ENCODE measurements at regions of chr6 and their contacts with region 1.

Region 1: DNA sequence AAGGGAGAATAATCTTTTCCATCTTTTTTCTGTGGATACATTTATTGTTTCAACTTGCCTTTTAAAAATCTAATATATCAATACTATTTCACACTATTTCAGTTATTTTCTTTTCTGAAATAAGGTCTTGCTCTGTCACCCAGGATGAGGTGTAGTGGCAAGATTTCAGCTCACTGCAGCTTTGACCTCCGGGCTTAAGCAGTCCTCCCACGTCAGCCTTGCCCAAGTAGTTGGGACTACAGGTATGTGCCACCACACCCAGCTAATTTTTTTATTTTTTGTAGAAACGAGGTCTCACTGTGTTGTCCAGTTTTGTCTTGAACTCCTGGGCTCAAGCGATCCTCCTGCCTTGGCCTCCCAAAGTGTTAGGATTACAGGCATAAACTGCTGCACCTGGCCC is 8.6 kb downstream of the KCTD20 start:
- DNase-seq: no peak
- ATAC-seq: no peak
- H3K4me3 ChIP-seq: no peak overlapping the region
- H3K27ac ChIP-seq: no peak overlapping the region
- H3K4me1 ChIP-seq: no peaks in the 10 kb centered on the region
- H3K27me3 ChIP-seq: no peaks in the 10 kb centered on the region
- CTCF ChIP-seq: no peak

Region 2: GRCh38 chr6:35980991-35981660 is 470.3 kb before region 1 on chr6:
- CTCF ChIA-PET with region 1: no interaction called
- POLR2A ChIA-PET with region 1: no interaction called
- in situ Hi-C with region 1: no loop called
- intact Hi-C with region 1: no loop called
- DNase-seq: no peak
- ATAC-seq: no peak
- H3K4me3 ChIP-seq: no peak overlapping the region
- H3K27ac ChIP-seq: no peak overlapping the region
- H3K4me1 ChIP-seq: no peaks in the 10 kb centered on the region
- H3K27me3 ChIP-seq: peaks cover 7% of the 10 kb centered on the region; the same call in 1 of the 2 replicates
- CTCF ChIP-seq: no peak

Region 3: GRCh38 chr6:36029464-36029863 is 421.9 kb before region 1 on chr6:
- CTCF ChIA-PET with region 1: no interaction called
- POLR2A ChIA-PET with region 1: no interaction called
- in situ Hi-C with region 1: no loop called
- intact Hi-C with region 1: no loop called
- DNase-seq: no peak
- ATAC-seq: no peak
- H3K4me3 ChIP-seq: peak overlapping the region; percentile 88 to 91; a peak in 3 of 4 replicates
- H3K27ac ChIP-seq: peak overlapping the region; percentile 91
- H3K4me1 ChIP-seq: peaks cover 15% of the 10 kb centered on the region
- H3K27me3 ChIP-seq: no peaks in the 10 kb centered on the region
- CTCF ChIP-seq: no peak

Region 4: DNA sequence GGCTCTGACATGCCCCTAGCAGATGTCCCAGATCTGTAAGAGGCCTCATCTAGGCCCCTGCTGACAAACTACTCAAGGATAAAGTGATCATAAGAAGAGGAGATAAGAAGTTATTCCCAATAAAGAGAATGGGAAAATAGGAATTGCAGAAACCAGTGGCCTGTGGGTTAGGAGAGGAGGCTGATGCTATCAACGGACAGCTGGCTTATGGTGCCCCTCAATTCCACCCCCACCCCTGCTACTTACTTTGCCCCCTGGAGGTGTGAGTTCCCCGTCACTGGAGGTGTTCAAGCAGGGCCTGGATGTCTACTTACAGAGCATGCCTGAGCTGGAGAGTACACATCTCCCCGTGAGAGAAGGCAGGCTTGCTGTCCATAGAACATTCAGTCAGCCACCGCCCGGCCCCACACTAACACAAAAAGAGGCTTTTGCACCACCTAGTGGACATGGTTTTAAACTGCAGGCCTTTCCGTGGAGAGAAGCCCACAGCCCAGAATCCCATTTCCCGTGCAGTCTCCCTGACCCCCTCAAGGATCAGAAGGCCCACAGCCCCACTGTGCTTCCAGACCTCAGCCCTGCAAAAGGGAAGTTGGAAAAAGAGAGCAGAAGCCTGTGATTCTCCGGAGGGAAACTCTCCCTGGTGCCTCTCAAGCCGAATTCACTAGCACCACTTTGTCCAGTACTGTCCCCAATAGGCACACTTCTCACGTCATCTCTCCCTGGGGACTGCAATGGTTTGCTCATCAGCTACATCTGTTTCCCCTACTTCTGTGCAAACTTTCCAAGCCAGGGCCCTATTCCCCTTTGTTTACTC is 90.9 kb before region 1 on chr6:
- CTCF ChIA-PET with region 1: no interaction called
- POLR2A ChIA-PET with region 1: no interaction called
- in situ Hi-C with region 1: no loop called
- intact Hi-C with region 1: no loop called
- DNase-seq: peak; percentile 27
- ATAC-seq: peak; percentile 94
- H3K4me3 ChIP-seq: no peak overlapping the region; a peak in 1 of 4 replicates
- H3K27ac ChIP-seq: no peak overlapping the region
- H3K4me1 ChIP-seq: 0 out of 2 replicates have a peak, but pooled peaks cover 4% of the 10 kb centered on the region
- H3K27me3 ChIP-seq: no peaks in the 10 kb centered on the region
- CTCF ChIP-seq: peak; percentile 88

Region 5: DNA sequence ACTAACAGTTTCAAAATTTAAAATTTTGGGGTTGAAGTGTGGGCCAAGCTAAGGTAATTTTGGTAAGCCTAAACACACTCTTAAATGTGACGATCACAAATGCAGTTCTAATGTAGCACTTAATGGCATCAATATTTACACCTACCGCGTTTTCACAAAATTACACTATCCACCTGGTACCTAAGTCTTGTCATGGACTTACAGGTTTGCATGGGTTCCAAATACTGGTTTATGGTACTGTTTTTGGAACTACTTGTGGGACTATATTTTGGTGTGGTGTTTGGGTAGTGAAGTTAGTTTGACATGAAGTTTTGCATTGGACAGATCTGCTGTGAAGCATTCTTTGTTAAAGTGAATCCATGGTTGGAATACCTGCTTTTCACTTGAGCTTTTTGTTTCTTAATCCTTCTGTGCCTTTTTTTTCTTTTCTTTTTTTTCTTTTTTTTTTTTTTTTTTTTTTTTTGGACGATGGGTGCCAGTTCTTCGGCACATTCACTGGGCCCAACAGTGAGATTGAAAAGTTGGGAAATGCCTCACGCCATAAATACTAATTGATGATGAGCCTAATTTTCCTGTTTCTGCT is 149.3 kb after region 1 on chr6:
- CTCF ChIA-PET with region 1: interaction called, 14 read pairs
- POLR2A ChIA-PET with region 1: no interaction called
- in situ Hi-C with region 1: no loop called
- intact Hi-C with region 1: no loop called
- DNase-seq: no peak
- ATAC-seq: no peak
- H3K4me3 ChIP-seq: no peak overlapping the region
- H3K27ac ChIP-seq: no peak overlapping the region
- H3K4me1 ChIP-seq: peaks cover 67% of the 10 kb centered on the region
- H3K27me3 ChIP-seq: no peaks in the 10 kb centered on the region
- CTCF ChIP-seq: no peak

Region 6: DNA sequence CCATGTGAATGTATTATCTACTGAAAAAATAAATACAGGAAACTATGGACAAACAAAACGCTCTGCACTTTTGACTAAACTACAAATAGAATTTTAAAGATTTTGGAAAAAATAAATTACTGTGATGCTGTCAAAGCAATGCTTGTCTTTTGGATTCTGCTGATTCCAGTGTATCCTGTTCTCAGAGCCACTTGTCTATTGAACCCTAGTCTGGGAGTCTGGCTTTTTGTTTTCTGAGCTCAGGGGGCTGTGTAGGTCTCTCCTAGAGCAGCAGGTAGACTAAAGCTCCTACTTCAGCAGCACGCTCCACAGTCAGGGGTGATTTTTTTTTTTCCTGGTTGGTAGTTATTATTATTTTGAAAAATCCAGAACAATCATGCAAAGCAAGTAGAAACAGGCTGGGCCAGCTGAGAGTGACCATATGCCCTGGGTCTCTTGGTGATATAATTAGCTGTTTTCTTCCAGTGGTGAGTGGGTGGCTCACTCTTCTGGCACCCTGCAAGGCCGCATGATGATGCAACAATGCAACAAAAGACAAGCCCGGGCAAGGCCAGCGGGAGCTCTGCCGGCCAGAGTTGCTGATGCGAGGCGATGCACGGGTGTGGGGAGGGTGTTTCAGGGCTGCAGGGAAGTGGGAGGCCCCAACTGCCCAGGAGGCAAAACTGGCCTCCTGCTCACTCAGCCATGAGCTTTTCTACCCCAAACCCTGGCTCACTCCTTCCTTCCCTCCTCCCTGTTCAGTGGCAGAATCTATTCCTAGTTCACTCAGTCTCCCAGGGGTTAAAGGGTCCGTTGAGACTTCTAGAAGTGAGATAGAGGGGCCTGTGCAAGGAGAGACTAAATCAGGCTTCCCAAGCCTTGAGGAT is 215.6 kb after region 1 on chr6:
- CTCF ChIA-PET with region 1: no interaction called
- POLR2A ChIA-PET with region 1: no interaction called
- in situ Hi-C with region 1: no loop called
- intact Hi-C with region 1: no loop called
- DNase-seq: no peak
- ATAC-seq: peak; percentile 46; the same call in 1 of the 2 replicates
- H3K4me3 ChIP-seq: no peak overlapping the region
- H3K27ac ChIP-seq: no peak overlapping the region
- H3K4me1 ChIP-seq: peaks cover 4% of the 10 kb centered on the region; the same call in 1 of the 2 replicates
- H3K27me3 ChIP-seq: no peaks in the 10 kb centered on the region
- CTCF ChIP-seq: no peak

Measured in Panc1 (cell line).